GM12878 (cell line): ENCODE measurements at regions of chr5 and their contacts with region 1.

Region 1: GRCh38 chr5:172984243-172984953 is 827 bp downstream of the ATP6V0E1 start:
- DNase-seq: peak; percentile 56
- ATAC-seq: peak; percentile 88
- H3K4me3 ChIP-seq: peak overlapping the region; percentile 99
- H3K27ac ChIP-seq: peak overlapping the region; percentile 98
- H3K4me1 ChIP-seq: peaks cover 3% of the 10 kb centered on the region; the same call in 1 of the 2 replicates
- H3K27me3 ChIP-seq: no peaks in the 10 kb centered on the region
- CTCF ChIP-seq: peak; percentile 57 to 80 (median 74)
- EP300 ChIP-seq: no peak
- POLR2A ChIP-seq: no peak
- RAD21 ChIP-seq: peak; percentile 82

Region 2: DNA sequence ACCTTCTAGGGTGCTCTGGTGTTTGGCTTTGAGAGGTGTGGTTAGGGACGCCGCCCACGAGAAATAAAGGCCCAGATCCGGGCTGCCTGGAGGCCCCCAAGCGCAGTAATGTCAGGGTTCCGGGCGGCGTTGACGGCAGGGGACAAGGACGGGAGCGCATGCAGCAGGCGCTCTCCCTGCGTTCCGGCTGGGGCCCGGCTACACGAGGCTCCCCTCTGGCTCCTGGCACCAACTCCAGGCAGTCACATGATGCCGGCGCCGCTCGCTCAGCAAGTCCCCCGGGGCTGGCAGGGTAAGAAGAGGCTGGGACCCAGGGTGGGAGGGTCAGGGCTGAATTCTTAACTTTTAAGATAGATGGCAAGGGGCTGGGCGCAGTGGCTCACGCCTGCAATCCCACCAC is 729.0 kb before region 1 on chr5:
- CTCF ChIA-PET with region 1: no interaction called
- POLR2A ChIA-PET with region 1: no interaction called
- RAD21 ChIA-PET with region 1: no interaction called
- SMC1A ChIA-PET with region 1: no interaction called
- in situ Hi-C with region 1: no loop called
- intact Hi-C with region 1: no loop called
- DNase-seq: no peak
- ATAC-seq: no peak
- H3K4me3 ChIP-seq: no peak overlapping the region
- H3K27ac ChIP-seq: no peak overlapping the region
- H3K4me1 ChIP-seq: no peaks in the 10 kb centered on the region
- H3K27me3 ChIP-seq: no peaks in the 10 kb centered on the region
- CTCF ChIP-seq: no peak
- EP300 ChIP-seq: no peak
- POLR2A ChIP-seq: no peak
- RAD21 ChIP-seq: no peak

Region 3: GRCh38 chr5:173001229-173001841 is 16.9 kb after region 1 on chr5:
- CTCF ChIA-PET with region 1: interaction called, 16 read pairs
- POLR2A ChIA-PET with region 1: interaction called, 9 read pairs
- RAD21 ChIA-PET with region 1: interaction called, 15 read pairs
- SMC1A ChIA-PET with region 1: interaction called, 8 read pairs
- in situ Hi-C with region 1: no loop called
- intact Hi-C with region 1: no loop called
- DNase-seq: peak; percentile 51
- ATAC-seq: peak; percentile 93
- H3K4me3 ChIP-seq: peak overlapping the region; percentile 28; the same call in 1 of the 2 replicates
- H3K27ac ChIP-seq: peak overlapping the region; percentile 20; the same call in 1 of the 2 replicates
- H3K4me1 ChIP-seq: peaks cover 19% of the 10 kb centered on the region
- H3K27me3 ChIP-seq: no peaks in the 10 kb centered on the region
- CTCF ChIP-seq: no peak
- EP300 ChIP-seq: no peak
- POLR2A ChIP-seq: no peak
- RAD21 ChIP-seq: no peak

Region 4: DNA sequence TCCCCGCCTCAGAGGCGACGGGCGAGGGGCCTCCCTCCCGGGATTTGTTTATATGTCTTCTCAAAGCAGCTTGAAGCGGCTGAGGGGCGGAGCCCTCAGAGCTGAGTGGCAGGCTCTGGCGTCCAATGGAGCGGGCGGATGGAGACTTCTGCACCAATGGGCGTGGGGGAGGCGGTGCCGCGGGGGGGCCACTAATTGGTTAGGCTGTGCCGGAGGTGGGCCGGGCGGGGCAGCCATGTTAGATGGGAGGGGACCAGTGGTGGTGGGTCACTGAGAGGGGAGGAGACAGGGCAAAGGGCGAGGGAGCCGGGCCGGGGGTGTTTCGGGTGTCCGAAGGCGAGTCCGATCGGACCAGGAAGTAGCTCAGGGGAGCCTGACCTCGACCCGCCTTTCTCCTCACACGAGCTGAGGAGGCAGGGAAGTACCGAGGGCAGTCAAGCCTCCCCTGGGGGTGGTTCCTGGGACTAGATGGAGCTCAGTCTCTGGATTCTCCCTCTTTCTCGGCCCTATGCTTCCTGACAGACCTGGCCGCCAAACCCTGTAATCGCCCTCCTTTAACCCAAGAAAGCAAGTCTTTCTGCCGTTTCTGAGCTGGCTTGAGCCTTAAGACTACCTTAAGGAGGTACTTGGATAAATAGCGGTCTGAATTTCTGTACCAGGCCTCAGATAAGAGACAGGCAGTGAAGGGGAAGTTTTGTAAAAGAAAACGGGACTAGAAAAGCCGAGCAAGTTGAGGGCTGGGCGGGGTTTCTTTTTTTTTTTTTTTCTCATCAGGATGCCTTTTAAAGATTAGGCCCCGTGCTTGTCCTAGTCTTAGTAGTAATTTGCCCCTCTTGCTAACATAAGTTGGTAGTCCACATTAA is 72.9 kb after region 1 on chr5:
- CTCF ChIA-PET with region 1: interaction called, 17 read pairs
- POLR2A ChIA-PET with region 1: interaction called, 30 read pairs
- RAD21 ChIA-PET with region 1: interaction called, 27 read pairs
- SMC1A ChIA-PET with region 1: interaction called, 22 read pairs
- in situ Hi-C with region 1: no loop called
- intact Hi-C with region 1: loop called (anchors 2 kb)
- DNase-seq: peak; percentile 85
- ATAC-seq: peak; percentile 92
- H3K4me3 ChIP-seq: peak overlapping the region; percentile 93
- H3K27ac ChIP-seq: peak overlapping the region; percentile 97
- H3K4me1 ChIP-seq: peaks cover 18% of the 10 kb centered on the region
- H3K27me3 ChIP-seq: no peaks in the 10 kb centered on the region
- CTCF ChIP-seq: peak in 1 of 3 experiments; percentile 0; a peak in 1 of 6 replicates
- EP300 ChIP-seq: no peak
- POLR2A ChIP-seq: peak; percentile 72
- RAD21 ChIP-seq: no peak

Region 5: GRCh38 chr5:173114536-173114935 is 130.1 kb after region 1 on chr5:
- CTCF ChIA-PET with region 1: no interaction called
- POLR2A ChIA-PET with region 1: no interaction called
- RAD21 ChIA-PET with region 1: no interaction called
- SMC1A ChIA-PET with region 1: no interaction called
- in situ Hi-C with region 1: no loop called
- intact Hi-C with region 1: no loop called
- DNase-seq: no peak
- ATAC-seq: no peak
- H3K4me3 ChIP-seq: no peak overlapping the region
- H3K27ac ChIP-seq: no peak overlapping the region
- H3K4me1 ChIP-seq: no peaks in the 10 kb centered on the region
- H3K27me3 ChIP-seq: no peaks in the 10 kb centered on the region
- CTCF ChIP-seq: no peak
- EP300 ChIP-seq: no peak
- POLR2A ChIP-seq: no peak
- RAD21 ChIP-seq: no peak

Region 6: DNA sequence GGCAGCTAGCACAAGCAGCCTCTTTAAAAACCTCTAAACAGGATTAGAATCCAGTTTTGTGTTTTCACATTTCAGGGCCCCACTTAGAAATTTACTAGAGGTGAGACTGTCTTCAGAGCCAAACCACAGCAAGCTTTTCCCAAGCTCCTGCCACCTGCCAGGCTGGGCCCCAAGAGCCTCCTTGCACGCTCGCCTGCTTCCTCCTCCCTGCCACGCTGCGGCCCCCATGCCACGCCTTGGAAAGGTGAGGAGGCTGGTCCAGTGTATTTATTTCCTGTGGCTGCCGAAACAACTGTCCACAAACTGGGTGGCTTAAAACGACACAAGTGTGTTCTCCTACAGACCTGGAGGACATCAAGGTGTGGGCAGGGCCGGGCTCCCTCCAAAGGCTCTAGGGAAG is 207.2 kb after region 1 on chr5:
- CTCF ChIA-PET with region 1: interaction called, 11 read pairs
- POLR2A ChIA-PET with region 1: no interaction called
- RAD21 ChIA-PET with region 1: interaction called, 7 read pairs
- SMC1A ChIA-PET with region 1: interaction called, 3 read pairs
- in situ Hi-C with region 1: no loop called
- intact Hi-C with region 1: no loop called
- DNase-seq: no peak
- ATAC-seq: no peak
- H3K4me3 ChIP-seq: no peak overlapping the region
- H3K27ac ChIP-seq: no peak overlapping the region
- H3K4me1 ChIP-seq: no peaks in the 10 kb centered on the region
- H3K27me3 ChIP-seq: peaks cover 0 to 1% of the 10 kb centered on the region in 2 experiments; a peak in 1 of 4 replicates
- CTCF ChIP-seq: no peak
- EP300 ChIP-seq: no peak
- POLR2A ChIP-seq: no peak
- RAD21 ChIP-seq: no peak

Region 7: DNA sequence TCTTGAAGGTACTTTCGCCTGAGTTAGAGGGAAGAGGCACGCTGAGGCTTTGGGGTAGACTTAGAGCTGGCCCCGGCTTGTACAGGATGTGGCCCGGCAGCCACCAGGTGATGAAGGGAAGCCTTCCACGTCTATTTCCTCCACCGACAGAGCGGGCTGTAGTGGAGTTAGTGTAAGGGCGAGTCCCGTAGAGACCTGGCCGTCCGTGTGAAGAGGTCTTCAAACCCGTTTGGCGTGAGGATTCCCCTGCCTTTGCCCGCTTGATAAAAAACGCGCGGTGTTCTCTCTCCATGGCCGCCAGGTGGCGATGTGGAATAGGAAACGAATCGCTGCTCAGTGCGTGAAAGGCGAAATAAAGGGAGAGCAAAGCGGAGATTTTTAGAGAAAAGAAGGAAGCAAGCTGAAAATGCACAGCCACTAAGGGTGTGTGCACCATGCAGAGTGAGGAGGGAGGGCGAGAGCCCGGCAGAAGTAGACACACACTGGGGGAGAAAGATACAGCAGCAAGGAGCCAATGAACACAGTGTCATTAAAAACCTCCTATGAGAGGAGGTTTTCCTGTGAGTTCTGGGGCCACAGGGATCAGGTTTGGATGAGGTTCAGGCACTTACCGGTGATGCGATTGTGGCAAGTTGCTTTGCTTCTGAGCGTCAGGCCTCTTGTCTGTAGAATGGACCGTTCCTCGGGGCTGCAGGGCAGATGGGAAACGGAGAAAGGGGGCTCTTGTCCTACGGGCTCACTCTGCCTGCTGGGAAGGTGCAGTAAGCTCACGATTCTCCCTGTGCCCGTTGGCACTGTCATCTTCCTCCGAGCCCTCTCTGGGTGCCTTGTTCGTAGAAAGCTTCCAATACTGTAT is 309.6 kb after region 1 on chr5:
- CTCF ChIA-PET with region 1: interaction called, 4 read pairs
- POLR2A ChIA-PET with region 1: no interaction called
- RAD21 ChIA-PET with region 1: interaction called, 4 read pairs
- SMC1A ChIA-PET with region 1: interaction called, 3 read pairs
- in situ Hi-C with region 1: loop called (anchors 5 kb)
- intact Hi-C with region 1: no loop called
- DNase-seq: peak; percentile 35
- ATAC-seq: peak; percentile 88
- H3K4me3 ChIP-seq: peak overlapping the region; percentile 28; the same call in 1 of the 2 replicates
- H3K27ac ChIP-seq: 0 out of 2 replicates have a peak overlapping the region, but pooled peaks have one; percentile 41
- H3K4me1 ChIP-seq: peaks cover 26% of the 10 kb centered on the region
- H3K27me3 ChIP-seq: peaks cover 0 to 2% of the 10 kb centered on the region in 2 experiments; a peak in 2 of 4 replicates
- CTCF ChIP-seq: peak; percentile 78 to 92 (median 86)
- EP300 ChIP-seq: no peak
- POLR2A ChIP-seq: no peak
- RAD21 ChIP-seq: peak; percentile 89

Region 8: DNA sequence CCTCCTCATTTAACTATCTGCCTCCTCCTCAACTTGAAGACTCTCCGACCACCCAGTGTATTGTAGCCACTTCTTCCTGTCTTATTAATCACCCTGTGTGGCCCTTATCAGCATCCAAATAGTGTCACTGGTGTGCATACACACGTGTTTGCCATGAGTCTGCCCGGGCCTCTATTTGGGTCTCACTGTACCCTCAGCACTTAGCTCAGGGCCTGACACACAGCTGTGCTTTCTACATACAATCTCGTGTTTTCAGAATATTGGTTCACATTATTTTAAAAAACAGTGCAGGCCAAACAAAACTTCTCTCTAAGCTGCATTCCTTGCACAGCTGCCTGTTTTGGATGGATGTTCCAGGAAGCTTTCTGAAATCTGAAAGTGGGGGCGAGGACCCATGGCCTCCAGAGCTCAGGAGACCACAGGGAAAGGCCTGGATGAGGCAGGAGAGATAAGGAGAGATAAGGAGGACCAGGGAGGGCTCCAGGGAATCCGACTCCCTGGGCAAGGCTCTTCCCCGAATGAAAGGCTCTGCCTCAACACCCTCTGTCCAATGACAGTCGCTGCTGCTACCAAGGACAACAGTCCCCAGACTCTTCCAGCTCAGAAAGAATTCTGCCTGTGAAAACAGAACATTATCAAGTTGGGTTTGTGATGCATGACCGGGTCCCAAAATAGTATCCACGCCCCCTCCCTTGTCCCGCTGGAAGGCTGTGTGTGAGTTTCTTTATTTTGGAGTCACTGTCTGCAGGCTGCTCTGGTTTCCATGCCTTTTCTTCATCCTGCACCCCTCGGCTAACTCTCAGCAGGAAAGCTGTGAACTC is 1316.8 kb after region 1 on chr5:
- CTCF ChIA-PET with region 1: no interaction called
- POLR2A ChIA-PET with region 1: no interaction called
- RAD21 ChIA-PET with region 1: no interaction called
- SMC1A ChIA-PET with region 1: no interaction called
- in situ Hi-C with region 1: no loop called
- intact Hi-C with region 1: no loop called
- DNase-seq: no peak
- ATAC-seq: peak; percentile 42
- H3K4me3 ChIP-seq: no peak overlapping the region
- H3K27ac ChIP-seq: peak overlapping the region; percentile 25; the same call in 1 of the 2 replicates
- H3K4me1 ChIP-seq: peaks cover 19% of the 10 kb centered on the region
- H3K27me3 ChIP-seq: no peaks in the 10 kb centered on the region
- CTCF ChIP-seq: no peak
- EP300 ChIP-seq: no peak
- POLR2A ChIP-seq: no peak
- RAD21 ChIP-seq: no peak